MCF 10A (cell line): ENCODE measurements at regions of chr2 and their contacts with region 1.

Region 1: DNA sequence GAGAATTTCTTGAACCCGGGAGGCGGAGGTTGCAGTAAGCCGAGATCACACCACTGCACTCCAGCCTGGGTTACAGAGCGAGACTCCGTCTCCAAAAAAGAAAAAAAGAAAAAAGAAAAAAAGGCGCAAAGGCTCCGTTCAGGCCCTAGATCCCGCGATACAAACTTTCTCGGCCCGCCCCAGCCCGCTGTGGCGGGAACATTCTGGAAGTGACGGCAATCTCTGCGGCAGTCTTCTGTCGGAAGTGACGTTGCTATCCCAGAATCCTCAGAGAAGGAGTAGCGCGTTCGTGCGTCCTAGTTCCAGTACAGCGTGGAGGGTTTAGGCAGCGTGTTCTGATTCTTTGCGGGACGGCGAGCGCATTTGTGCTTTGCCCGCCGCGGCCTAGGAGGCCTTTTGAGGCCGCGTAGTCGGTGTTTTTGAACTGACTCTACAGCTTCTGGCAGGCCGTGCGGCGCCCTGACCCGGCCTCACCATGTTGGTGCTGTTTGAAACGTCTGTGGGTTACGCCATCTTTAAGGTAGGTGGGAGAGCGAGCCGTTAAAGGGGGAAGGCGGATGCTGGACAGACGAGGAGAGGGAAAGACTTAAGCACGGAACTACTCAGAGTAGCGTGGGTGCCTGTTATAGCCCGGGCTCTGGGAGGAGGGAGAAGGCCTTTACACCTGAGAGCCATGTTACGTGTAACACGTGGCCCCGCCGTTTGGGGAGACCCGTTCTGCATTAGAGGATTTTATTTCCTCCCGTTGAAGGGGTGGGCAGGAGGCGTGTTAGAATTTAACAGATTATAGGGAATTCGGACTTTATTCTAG is at the start of gene NOP58:
- DNase-seq: peak; percentile 96
- H3K4me3 Mint-ChIP-seq: no peak within 1 kb of the TSS
- H3K27ac Mint-ChIP-seq: peak within 1 kb of the TSS; percentile 64
- H3K4me1 Mint-ChIP-seq: peaks cover 7% of the 10 kb centered on the region
- H3K27me3 Mint-ChIP-seq: no peaks in the 10 kb centered on the region
- CTCF ChIP-seq: no peak
- total RNA-seq, gene NOP58: 212 and 231 TPM in 2 replicates

Region 2: GRCh38 chr2:202249521-202249850 is 16.2 kb before region 1 on chr2:
- CTCF ChIA-PET with region 1: interaction called, 5 read pairs
- POLR2A ChIA-PET with region 1: interaction called, 15 read pairs
- intact Hi-C with region 1: loop called (anchors 1 kb)
- DNase-seq: peak; percentile 82
- H3K4me3 Mint-ChIP-seq: peak overlapping the region; percentile 72
- H3K27ac Mint-ChIP-seq: peak overlapping the region; percentile 98
- H3K4me1 Mint-ChIP-seq: peaks cover 8% of the 10 kb centered on the region
- H3K27me3 Mint-ChIP-seq: no peaks in the 10 kb centered on the region
- CTCF ChIP-seq: no peak